ENCODE measurements at regions of chr4 and their contacts with region 1.

Region 1: DNA sequence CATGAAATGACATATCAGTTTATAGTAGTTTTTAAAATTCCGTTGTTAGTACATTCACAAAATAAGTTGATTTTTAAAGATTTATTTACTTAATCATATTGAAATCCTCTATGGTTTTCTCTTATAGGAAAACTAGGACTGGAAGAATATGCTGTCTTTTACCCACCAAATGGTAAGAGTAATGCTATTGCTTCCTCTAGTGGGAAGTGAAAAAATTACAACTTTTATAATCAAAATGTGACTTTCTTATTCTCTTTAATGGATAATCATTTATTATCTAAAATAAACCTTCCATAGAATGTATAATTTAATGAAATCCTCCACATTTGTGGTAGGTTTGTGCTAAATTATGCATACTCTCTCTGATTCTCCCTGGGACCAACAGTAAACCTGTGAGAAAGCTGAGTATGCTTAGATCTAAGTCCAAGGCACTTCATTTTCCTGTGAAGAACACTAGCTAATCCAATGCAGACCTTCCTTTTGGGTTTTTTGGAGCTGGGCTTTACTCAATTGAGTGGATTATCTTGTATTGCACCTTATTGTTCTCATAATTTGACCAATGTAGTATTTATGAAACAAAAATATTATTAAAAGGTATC is 136.2 kb downstream of the TBC1D19 start:
- DNase-seq: no peak

Region 2: GRCh38 chr4:26459054-26459755 is 260.8 kb before region 1 on chr4:
- intact Hi-C with region 1: loop called (anchors 5 kb)
- DNase-seq: no peak

Region 3: GRCh38 chr4:26685250-26685649 is 34.8 kb before region 1 on chr4:
- intact Hi-C with region 1: no loop called
- DNase-seq: no peak